CD4-positive, alpha-beta memory T cell (primary cell): ENCODE measurements at regions of chr17 and their contacts with region 1.

Region 1: DNA sequence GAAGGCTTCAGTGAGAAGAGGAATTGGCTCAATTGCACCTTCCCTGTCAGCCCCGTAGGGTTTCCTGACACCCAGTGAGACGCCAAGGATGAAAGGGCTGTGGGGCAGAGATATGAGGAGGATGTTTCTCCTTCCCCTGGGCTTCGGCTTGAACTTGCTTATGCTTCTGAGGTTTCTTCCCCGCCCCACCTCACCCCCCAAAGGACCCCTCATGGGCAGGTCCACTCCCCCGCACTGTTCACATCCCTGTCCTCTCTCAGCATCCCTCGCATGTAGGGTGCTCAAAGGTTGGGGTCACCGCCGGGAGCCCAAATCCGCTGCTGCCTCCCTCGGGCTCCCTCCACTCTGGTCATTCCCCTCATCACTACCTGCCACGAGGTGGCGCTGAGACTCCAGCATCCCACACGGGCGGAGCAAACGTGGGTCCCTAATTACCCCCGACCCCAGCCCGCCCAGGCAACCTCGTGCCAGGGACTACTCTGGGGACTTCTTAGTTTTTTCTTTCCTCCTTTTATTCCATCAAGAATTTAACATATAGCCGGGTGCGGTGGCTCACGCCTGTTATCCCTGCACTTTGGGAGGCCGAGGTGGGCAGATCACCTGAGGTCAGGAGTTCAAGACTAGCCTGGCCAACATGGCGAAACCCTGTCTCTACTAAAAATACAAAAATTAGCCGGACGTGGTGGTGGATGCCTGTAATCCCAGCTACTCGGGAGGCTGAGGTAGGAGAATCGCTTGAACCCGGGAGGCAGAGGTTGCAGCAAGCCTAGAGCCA is 3.3 kb upstream of the TRARG1 start:
- DNase-seq: peak; percentile 60 to 72 (median 69)
- H3K4me3 ChIP-seq: no peak overlapping the region
- H3K4me3 Mint-ChIP-seq: peak overlapping the region in 4 of 8 donors; percentile 47 to 68 (median 62)
- H3K27ac ChIP-seq: no peak overlapping the region
- H3K27ac Mint-ChIP-seq: peak overlapping the region in 3 of 7 donors; percentile 13 to 88 (median 54)
- H3K4me1 ChIP-seq: peaks cover 5% of the 10 kb centered on the region
- H3K4me1 Mint-ChIP-seq: peaks cover 0 to 8% (median 4%) of the 10 kb centered on the region in 4 donors
- H3K27me3 ChIP-seq: no peaks in the 10 kb centered on the region
- H3K27me3 Mint-ChIP-seq: peaks cover 9 to 22% of the 10 kb centered on the region in 2 donors

Region 2: GRCh38 chr17:1315891-1316403 is 39.8 kb after region 1 on chr17:
- CTCF ChIA-PET with region 1: no interaction called
- POLR2A ChIA-PET with region 1: no interaction called
- intact Hi-C with region 1: loop called (anchors 5 kb)
- DNase-seq: no peak
- H3K4me3 ChIP-seq: no peak overlapping the region
- H3K4me3 Mint-ChIP-seq: no peak overlapping the region
- H3K27ac ChIP-seq: no peak overlapping the region
- H3K27ac Mint-ChIP-seq: no peak overlapping the region
- H3K4me1 ChIP-seq: no peaks in the 10 kb centered on the region
- H3K4me1 Mint-ChIP-seq: no peaks in the 10 kb centered on the region
- H3K27me3 ChIP-seq: no peaks in the 10 kb centered on the region
- H3K27me3 Mint-ChIP-seq: peaks cover 3 to 8% of the 10 kb centered on the region in 2 donors